ENCODE measurements at regions of chr9 and their contacts with region 1.

Region 1: GRCh38 chr9:71911253-71912074 is at the start of gene C9orf85:
- DNase-seq: peak; percentile 98
- ATAC-seq: peak; percentile 88
- H3K4me3 ChIP-seq: peak within 1 kb of the TSS; percentile 87
- H3K27ac ChIP-seq: peak within 1 kb of the TSS; percentile 79
- H3K4me1 ChIP-seq: peaks cover 10% of the 10 kb centered on the region; the same call in 1 of the 2 replicates
- H3K27me3 ChIP-seq: no peaks in the 10 kb centered on the region
- CTCF ChIP-seq: no peak
- total RNA-seq, gene C9orf85: 7.9 and 13.4 TPM in 2 replicates

Region 2: DNA sequence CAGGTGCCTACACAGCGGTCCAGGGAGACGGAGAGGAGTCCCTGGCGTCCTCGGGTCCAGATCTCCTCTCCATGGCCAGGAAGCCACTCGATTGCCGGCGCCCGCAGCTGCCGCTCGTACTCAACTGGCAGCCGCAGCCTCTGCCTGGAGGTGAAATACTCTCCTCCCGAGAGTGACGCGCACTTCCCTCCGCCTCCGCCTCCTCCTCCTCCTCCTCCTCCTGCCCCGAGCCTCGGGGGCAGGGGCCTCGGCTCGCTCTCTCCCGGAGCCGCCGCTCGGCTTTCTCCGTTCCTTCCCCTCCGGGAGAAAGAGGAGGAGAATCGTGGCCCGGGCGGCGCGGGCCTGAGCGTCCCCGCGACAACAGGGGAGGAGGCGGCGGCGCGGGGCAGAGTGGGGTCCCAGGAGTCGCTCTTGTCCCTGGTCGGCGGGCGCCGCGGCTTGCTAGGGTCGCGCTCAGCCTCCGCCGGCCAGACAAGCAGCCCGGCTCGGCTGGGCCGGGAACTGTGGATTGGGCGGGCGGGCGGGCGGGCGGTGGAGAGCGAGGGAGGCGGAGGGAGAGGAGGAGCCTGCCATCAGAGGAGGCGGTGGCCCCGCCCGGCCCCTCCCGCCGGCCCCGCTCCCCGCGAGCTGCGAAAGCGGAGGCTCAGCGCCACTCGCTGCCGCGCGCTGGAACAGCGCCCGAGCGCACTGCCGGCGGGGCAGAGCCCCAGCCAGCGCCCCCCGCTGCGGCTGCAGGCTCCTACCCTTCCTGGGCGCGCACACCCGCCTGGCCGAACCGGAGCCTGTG is 142.9 kb before region 1 on chr9 and contains the start of gene CEMIP2:
- CTCF ChIA-PET with region 1: no interaction called
- POLR2A ChIA-PET with region 1: no interaction called
- intact Hi-C with region 1: loop called (anchors 2 kb)
- DNase-seq: peak; percentile 81
- ATAC-seq: peak; percentile 60
- H3K4me3 ChIP-seq: peak within 1 kb of the TSS; percentile 97
- H3K27ac ChIP-seq: peak within 1 kb of the TSS; percentile 66
- H3K4me1 ChIP-seq: peaks cover 43% of the 10 kb centered on the region
- H3K27me3 ChIP-seq: no peaks in the 10 kb centered on the region
- CTCF ChIP-seq: peak; percentile 21; the same call in 1 of the 2 replicates
- total RNA-seq, gene CEMIP2: 10.1 and 16.0 TPM in 2 replicates

Region 3: DNA sequence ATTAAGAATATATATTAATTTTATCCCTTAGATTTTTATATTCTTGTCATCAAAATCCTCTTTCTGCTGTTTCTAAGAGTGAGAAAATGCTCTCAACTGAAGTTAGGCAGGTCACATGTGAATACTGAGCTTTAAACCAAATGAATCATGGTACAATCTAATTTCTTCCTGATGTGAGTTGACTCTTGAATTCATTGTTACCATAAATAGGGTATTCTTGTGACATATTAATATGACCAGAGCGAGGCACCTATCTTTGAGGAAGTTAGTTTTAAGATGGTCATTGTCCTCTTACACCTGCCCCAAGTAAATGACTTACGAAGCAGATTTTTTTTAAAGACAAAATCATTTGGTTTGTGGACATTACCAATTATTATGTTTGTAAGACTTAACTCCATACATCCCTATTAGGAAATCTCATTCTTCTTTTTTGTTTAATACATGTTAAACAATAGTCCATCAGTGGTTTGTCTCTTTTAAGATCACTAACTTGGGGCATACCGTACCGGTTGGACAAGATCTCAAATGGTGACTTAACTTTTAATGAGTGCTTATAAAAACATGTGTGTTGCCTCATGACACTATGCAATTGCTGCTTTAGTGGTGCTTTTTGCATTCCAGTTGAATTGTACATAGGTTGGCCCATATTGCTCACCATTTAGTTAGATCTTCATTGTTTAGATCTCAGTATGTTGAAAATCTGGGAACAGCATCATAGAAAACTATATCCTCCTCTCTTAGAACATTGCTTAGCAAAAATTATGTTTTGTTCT is 17.6 kb after region 1 on chr9:
- CTCF ChIA-PET with region 1: no interaction called
- POLR2A ChIA-PET with region 1: interaction called, 13 read pairs
- intact Hi-C with region 1: no loop called
- DNase-seq: peak; percentile 85
- ATAC-seq: peak; percentile 32
- H3K4me3 ChIP-seq: peak overlapping the region; percentile 31; the same call in 1 of the 2 replicates
- H3K27ac ChIP-seq: peak overlapping the region; percentile 84
- H3K4me1 ChIP-seq: peaks cover 32% of the 10 kb centered on the region
- H3K27me3 ChIP-seq: no peaks in the 10 kb centered on the region
- CTCF ChIP-seq: no peak

Region 4: GRCh38 chr9:71975833-71976232 is 64.4 kb after region 1 on chr9:
- CTCF ChIA-PET with region 1: no interaction called
- POLR2A ChIA-PET with region 1: no interaction called
- intact Hi-C with region 1: loop called (anchors 1 kb)
- DNase-seq: peak; percentile 17
- ATAC-seq: 0 out of 2 replicates have a peak, but pooled peaks have one; percentile 31
- H3K4me3 ChIP-seq: no peak overlapping the region
- H3K27ac ChIP-seq: no peak overlapping the region
- H3K4me1 ChIP-seq: no peaks in the 10 kb centered on the region
- H3K27me3 ChIP-seq: no peaks in the 10 kb centered on the region
- CTCF ChIP-seq: peak; percentile 59

Region 5: GRCh38 chr9:72149231-72149975 is 237.9 kb after region 1 on chr9 and contains the start of gene GDA:
- CTCF ChIA-PET with region 1: no interaction called
- POLR2A ChIA-PET with region 1: no interaction called
- intact Hi-C with region 1: no loop called
- DNase-seq: no peak
- ATAC-seq: no peak
- H3K4me3 ChIP-seq: no peak within 1 kb of the TSS
- H3K27ac ChIP-seq: no peak within 1 kb of the TSS
- H3K4me1 ChIP-seq: peaks cover 9% of the 10 kb centered on the region
- H3K27me3 ChIP-seq: no peaks in the 10 kb centered on the region
- CTCF ChIP-seq: no peak
- total RNA-seq, gene GDA: not detected in 2 replicates

Region 6: DNA sequence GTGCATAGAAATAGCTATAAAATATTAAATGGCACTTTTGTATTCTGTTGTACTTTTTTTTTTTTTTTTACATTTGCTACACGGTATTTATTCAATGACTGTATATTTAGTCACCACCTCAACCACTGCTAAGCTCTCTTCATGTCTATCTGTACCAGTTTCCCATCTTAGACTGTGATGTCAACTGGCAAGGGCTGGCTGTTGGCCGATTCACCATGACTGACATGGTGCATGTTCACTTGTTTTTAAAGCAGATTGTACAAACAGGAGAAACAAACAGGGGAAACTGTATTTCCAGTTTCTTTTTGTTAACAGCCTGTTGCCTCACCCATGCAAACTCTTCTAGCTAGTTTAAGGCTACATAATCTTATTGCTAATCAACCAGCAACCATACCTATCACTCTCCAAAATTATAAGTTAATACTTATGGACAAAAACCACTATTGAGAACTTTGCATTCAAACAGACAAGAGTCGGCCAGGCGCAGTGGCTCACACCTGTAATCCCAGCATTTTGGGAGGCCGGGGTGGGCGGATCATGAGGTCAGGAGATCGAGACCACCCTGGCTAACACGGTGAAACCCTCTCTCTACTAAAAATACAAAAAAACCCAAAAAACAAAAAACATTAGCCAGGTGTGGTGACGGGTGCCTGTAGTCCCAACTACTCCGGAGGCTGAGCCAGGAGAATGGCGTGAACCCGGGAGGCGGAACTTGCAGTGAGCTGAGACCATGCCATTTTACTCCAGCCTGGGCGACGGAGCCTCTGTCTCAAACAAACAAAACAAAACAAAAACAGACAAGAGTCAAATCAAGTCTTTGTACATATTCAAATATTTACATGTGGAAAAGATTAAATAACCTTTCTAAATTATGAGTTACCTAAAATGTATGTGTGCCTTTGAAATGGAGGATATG is 440.3 kb after region 1 on chr9:
- CTCF ChIA-PET with region 1: no interaction called
- POLR2A ChIA-PET with region 1: interaction called, 26 read pairs
- intact Hi-C with region 1: no loop called
- DNase-seq: peak; percentile 84
- ATAC-seq: peak; percentile 99
- H3K4me3 ChIP-seq: no peak overlapping the region
- H3K27ac ChIP-seq: peak overlapping the region; percentile 39
- H3K4me1 ChIP-seq: peaks cover 20% of the 10 kb centered on the region
- H3K27me3 ChIP-seq: no peaks in the 10 kb centered on the region
- CTCF ChIP-seq: no peak